ENCODE measurements at regions of chr20 and their contacts with region 1.

Region 1: DNA sequence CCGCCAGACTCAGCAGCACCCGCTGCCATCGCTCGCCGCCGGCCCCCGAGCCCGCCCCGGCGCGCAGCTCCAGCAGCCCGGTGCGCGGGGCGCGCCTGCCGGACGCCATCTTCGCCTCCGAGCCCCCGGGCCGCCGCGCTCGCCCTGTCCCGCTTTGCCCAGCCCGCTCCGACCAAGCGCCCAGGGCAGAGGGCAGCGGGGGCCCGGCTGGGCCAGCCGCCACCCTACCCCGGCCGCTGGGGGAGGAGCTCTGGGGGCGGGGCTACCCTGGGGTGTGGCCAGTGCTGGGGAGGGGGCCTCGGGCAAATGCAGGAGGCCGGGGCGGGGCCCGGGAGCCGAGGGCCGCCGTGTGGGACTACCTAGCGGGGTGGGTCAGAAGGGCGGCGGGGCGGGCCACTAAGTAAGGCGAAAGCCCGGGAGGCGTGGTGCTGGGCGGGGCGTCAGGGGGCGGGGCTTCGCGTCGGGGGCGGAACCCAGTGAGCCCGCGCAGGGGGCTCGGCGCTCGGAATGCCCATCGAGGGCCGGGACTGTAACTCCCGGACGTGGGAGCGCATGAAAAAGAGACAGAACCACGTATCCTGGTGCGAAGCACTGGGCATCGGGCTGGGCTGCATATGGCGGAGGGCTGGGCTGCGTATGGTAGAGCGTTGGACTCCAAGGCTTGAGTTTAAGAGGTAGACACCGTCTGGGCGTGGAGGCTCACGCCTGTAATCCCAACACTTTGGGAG is at the start of gene SNTA1:
- DNase-seq: peak; percentile 100
- H3K4me3 ChIP-seq: peak within 1 kb of the TSS; percentile 72
- H3K4me3 Mint-ChIP-seq: peak within 1 kb of the TSS; percentile 89
- H3K27ac Mint-ChIP-seq: peak within 1 kb of the TSS; percentile 9
- H3K4me1 ChIP-seq: peaks cover 22% of the 10 kb centered on the region
- H3K4me1 Mint-ChIP-seq: peaks cover 26% of the 10 kb centered on the region
- H3K27me3 ChIP-seq: no peaks in the 10 kb centered on the region
- H3K27me3 Mint-ChIP-seq: no peaks in the 10 kb centered on the region
- CTCF ChIP-seq: no peak
- total RNA-seq, gene SNTA1: 13.6 and 15.4 TPM in 2 replicates

Region 2: GRCh38 chr20:32894026-32894483 is 549.6 kb before region 1 on chr20:
- CTCF ChIA-PET with region 1: no interaction called
- POLR2A ChIA-PET with region 1: no interaction called
- intact Hi-C with region 1: no loop called
- DNase-seq: peak in 1 of 2 experiments; percentile 57
- H3K4me3 ChIP-seq: no peak overlapping the region
- H3K4me3 Mint-ChIP-seq: no peak overlapping the region
- H3K27ac Mint-ChIP-seq: no peak overlapping the region
- H3K4me1 ChIP-seq: no peaks in the 10 kb centered on the region
- H3K4me1 Mint-ChIP-seq: no peaks in the 10 kb centered on the region
- H3K27me3 ChIP-seq: no peaks in the 10 kb centered on the region
- H3K27me3 Mint-ChIP-seq: no peaks in the 10 kb centered on the region
- CTCF ChIP-seq: peak; percentile 45 to 75

Region 3: DNA sequence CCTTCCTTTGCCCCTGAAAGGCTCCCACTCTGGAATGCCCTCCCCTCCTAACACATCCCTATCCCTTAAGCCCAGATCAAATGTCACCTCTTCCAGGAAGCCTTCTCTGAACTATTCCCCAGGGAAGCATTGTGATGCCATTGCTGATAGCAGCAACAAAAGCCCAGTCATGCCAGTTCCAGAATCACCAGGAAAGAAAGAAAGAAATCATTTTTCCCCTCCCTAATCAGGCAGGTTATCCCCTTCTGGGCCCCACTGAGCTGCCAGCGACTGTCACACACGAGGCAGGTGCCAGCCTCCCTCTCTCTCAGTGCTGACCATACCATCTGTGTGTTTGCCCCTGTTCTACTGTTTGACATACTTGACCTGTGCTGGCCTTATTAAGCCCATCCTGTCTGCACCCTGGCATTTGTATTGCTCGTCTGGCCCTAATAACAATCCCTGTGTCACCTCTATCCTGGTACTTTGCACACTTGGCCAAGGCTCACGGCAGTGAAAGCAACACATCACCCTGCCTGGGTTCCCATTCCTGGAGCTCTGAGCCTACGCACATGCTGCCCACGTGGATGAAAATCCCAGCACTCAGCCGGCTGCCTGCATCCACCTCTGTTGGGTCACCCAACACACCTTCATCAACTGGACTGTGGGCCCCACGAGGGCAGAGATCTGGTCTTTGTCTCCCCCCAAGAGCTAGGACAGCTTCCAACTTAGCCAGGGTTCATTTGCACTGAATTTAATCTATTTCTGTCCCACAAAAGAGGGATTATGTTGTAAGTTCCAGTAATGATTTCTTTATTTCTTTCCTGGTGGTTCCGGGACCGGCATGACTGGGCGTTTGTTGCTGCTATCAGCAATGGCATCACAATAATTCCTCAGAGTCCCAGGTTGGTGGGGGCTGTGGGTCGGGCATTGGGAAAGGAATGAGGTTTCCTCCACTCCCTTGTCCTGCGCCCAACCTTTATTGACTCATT is 165.9 kb before region 1 on chr20:
- CTCF ChIA-PET with region 1: interaction called, 11 read pairs
- POLR2A ChIA-PET with region 1: no interaction called
- intact Hi-C with region 1: no loop called
- DNase-seq: peak in 1 of 2 experiments; percentile 39
- H3K4me3 ChIP-seq: no peak overlapping the region
- H3K4me3 Mint-ChIP-seq: no peak overlapping the region
- H3K27ac Mint-ChIP-seq: no peak overlapping the region
- H3K4me1 ChIP-seq: no peaks in the 10 kb centered on the region
- H3K4me1 Mint-ChIP-seq: peaks cover 5% of the 10 kb centered on the region
- H3K27me3 ChIP-seq: no peaks in the 10 kb centered on the region; the same call in 1 of the 2 replicates
- H3K27me3 Mint-ChIP-seq: peaks cover 12% of the 10 kb centered on the region
- CTCF ChIP-seq: no peak

Region 4: DNA sequence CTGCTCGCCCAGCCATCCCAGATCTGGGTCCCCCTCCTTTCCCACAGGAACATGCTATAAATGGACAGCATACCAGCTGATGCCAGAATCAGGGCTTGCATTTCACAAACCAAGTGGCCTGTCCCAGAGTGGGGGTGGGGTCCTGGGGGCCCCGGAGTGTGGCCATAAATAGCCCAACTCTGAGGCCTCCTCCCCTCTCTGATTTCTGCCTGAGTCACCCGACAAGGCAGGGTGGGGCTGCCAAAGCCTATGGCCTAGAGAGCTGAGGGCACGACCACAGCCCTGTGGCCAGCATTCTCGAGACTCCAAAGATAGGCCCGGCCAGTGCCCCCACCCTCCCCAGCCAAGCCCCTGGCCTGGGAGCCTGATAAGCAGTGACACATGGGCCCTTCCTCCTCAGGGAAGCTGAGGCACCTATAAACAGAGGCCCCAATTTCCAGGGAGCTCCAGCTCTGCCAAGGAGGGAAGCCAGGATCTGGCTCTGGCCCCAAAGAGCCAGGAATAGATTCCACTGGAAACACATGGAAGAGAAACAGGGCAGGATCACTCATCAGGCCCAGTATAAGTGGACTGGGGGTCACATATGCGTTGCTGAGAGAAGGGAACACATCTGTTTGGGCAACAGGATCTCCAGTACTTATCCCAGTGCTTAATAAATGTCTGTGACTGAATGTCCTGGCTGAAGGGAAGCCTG is 20.4 kb before region 1 on chr20:
- CTCF ChIA-PET with region 1: no interaction called
- POLR2A ChIA-PET with region 1: interaction called, 10 read pairs
- intact Hi-C with region 1: no loop called
- DNase-seq: peak; percentile 34 to 72
- H3K4me3 ChIP-seq: no peak overlapping the region
- H3K4me3 Mint-ChIP-seq: no peak overlapping the region
- H3K27ac Mint-ChIP-seq: no peak overlapping the region
- H3K4me1 ChIP-seq: peaks cover 11% of the 10 kb centered on the region; the same call in 1 of the 2 replicates
- H3K4me1 Mint-ChIP-seq: no peaks in the 10 kb centered on the region
- H3K27me3 ChIP-seq: no peaks in the 10 kb centered on the region
- H3K27me3 Mint-ChIP-seq: no peaks in the 10 kb centered on the region
- CTCF ChIP-seq: no peak

Region 5: GRCh38 chr20:33460711-33461110 is 17.0 kb after region 1 on chr20:
- CTCF ChIA-PET with region 1: interaction called, 10 read pairs
- POLR2A ChIA-PET with region 1: interaction called, 6 read pairs
- intact Hi-C with region 1: no loop called
- DNase-seq: no peak
- H3K4me3 ChIP-seq: no peak overlapping the region
- H3K4me3 Mint-ChIP-seq: no peak overlapping the region
- H3K27ac Mint-ChIP-seq: no peak overlapping the region
- H3K4me1 ChIP-seq: no peaks in the 10 kb centered on the region; the same call in 1 of the 2 replicates
- H3K4me1 Mint-ChIP-seq: no peaks in the 10 kb centered on the region
- H3K27me3 ChIP-seq: no peaks in the 10 kb centered on the region
- H3K27me3 Mint-ChIP-seq: no peaks in the 10 kb centered on the region
- CTCF ChIP-seq: no peak

Region 6: GRCh38 chr20:33653218-33653899 is 209.7 kb after region 1 on chr20:
- CTCF ChIA-PET with region 1: interaction called, 12 read pairs
- POLR2A ChIA-PET with region 1: no interaction called
- intact Hi-C with region 1: no loop called
- DNase-seq: peak; percentile 90 to 92
- H3K4me3 ChIP-seq: no peak overlapping the region
- H3K4me3 Mint-ChIP-seq: peak overlapping the region; percentile 24
- H3K27ac Mint-ChIP-seq: peak overlapping the region; percentile 66
- H3K4me1 ChIP-seq: peaks cover 27% of the 10 kb centered on the region
- H3K4me1 Mint-ChIP-seq: peaks cover 25% of the 10 kb centered on the region
- H3K27me3 ChIP-seq: no peaks in the 10 kb centered on the region
- H3K27me3 Mint-ChIP-seq: no peaks in the 10 kb centered on the region
- CTCF ChIP-seq: peak; percentile 99

Measured in Caco-2 (cell line).